ENCODE measurements at regions of chr7 and their contacts with region 1.

Region 1: GRCh38 chr7:26200444-26201246 is at the start of gene HNRNPA2B1:
- DNase-seq: peak; percentile 97
- ATAC-seq: peak; percentile 79
- total RNA-seq, gene HNRNPA2B1: 295 to 453 TPM

Region 2: GRCh38 chr7:26090927-26091519 is 109.6 kb before region 1 on chr7:
- intact Hi-C with region 1: loop called in 1 of 2 experiments (anchors 10 kb)
- DNase-seq: no peak
- ATAC-seq: peak; percentile 82

Region 3: GRCh38 chr7:27160546-27161213 is 960.0 kb after region 1 on chr7:
- intact Hi-C with region 1: loop called in 1 of 2 experiments (anchors 5 kb)
- DNase-seq: peak; percentile 83 to 94
- ATAC-seq: peak; percentile 30